Calu3 (cell line): ENCODE measurements at regions of chr17 and their contacts with region 1.

Region 1: GRCh38 chr17:49227436-49228261 is 2.9 kb downstream of the PHOSPHO1 start:
- DNase-seq: peak; percentile 90
- H3K4me3 Mint-ChIP-seq: no peak overlapping the region
- H3K27ac Mint-ChIP-seq: no peak overlapping the region
- H3K4me1 Mint-ChIP-seq: peaks cover 12% of the 10 kb centered on the region
- H3K27me3 Mint-ChIP-seq: peaks cover 94% of the 10 kb centered on the region
- CTCF ChIP-seq: peak; percentile 89

Region 2: DNA sequence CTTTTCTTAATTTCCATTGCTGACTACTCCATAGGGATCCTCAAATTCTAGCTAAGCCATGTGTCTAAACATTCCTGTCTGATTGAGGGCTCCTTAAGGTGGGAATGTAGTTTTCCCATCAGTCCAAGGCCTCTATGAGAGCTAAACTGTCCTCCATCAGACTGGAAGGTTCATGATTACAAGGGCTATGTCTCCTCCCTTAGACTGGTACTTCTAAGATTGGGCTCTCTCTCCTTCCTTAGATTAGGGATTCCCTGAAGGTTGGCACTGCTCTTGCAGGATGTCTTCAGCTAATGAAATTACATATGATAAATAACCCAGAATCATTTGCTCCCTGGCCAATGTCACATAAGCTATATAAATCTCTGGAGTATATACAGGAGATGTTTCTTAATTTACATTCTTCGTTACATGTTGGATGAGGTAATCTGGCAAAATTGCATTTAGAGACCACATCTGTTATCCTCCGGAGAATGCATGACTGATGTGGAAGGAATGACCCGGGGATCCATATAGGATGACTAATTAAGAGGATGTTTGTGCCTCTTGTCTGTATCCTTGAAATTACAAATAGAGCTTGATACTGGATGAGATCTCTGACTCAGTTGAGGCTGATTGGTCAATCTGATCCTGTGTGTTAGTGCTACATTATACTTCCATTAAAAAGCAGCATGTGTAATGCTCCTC is 80.9 kb before region 1 on chr17:
- CTCF ChIA-PET with region 1: no interaction called
- intact Hi-C with region 1: no loop called
- DNase-seq: peak; percentile 31
- H3K4me3 Mint-ChIP-seq: no peak overlapping the region
- H3K27ac Mint-ChIP-seq: peak overlapping the region; percentile 22
- H3K4me1 Mint-ChIP-seq: peaks cover 21% of the 10 kb centered on the region
- H3K27me3 Mint-ChIP-seq: peaks cover 23% of the 10 kb centered on the region
- CTCF ChIP-seq: no peak

Region 3: GRCh38 chr17:49191917-49192741 is 35.5 kb before region 1 on chr17:
- CTCF ChIA-PET with region 1: interaction called, 4 read pairs
- intact Hi-C with region 1: loop called (anchors 5 kb)
- DNase-seq: peak; percentile 96
- H3K4me3 Mint-ChIP-seq: peak overlapping the region; percentile 78
- H3K27ac Mint-ChIP-seq: peak overlapping the region; percentile 98
- H3K4me1 Mint-ChIP-seq: peaks cover 9% of the 10 kb centered on the region
- H3K27me3 Mint-ChIP-seq: no peaks in the 10 kb centered on the region
- CTCF ChIP-seq: peak; percentile 31

Region 4: GRCh38 chr17:49239963-49240362 is 12.3 kb after region 1 on chr17:
- CTCF ChIA-PET with region 1: interaction called, 10 read pairs
- intact Hi-C with region 1: no loop called
- DNase-seq: no peak
- H3K4me3 Mint-ChIP-seq: no peak overlapping the region
- H3K27ac Mint-ChIP-seq: no peak overlapping the region
- H3K4me1 Mint-ChIP-seq: no peaks in the 10 kb centered on the region
- H3K27me3 Mint-ChIP-seq: peaks cover 35% of the 10 kb centered on the region
- CTCF ChIP-seq: no peak